ENCODE measurements at regions of chr11 and their contacts with region 1.

Region 1: DNA sequence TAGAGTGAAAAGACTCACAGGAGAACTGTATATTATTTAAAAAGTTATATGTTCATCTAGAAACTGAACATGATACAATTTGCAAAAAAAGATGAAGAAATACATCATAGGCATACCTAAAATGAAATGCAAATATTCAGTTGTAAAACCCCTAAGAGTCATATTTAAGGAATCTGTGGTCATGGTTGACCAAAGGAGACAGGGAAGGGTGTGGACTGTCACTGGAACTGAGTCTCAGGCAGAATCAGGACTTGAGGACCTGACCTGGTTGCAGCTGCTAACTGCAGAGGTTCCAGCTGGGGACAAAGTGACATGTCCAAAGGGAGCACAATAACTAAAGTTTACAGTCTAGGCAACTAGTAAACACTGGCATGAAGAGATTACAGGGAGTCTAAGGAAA is 211.3 kb upstream of the RAG2 start:
- DNase-seq: no peak
- H3K4me3 Mint-ChIP-seq: no peak overlapping the region
- H3K27ac Mint-ChIP-seq: no peak overlapping the region
- H3K4me1 Mint-ChIP-seq: no peaks in the 10 kb centered on the region
- H3K27me3 Mint-ChIP-seq: no peaks in the 10 kb centered on the region

Region 2: GRCh38 chr11:36874291-36874690 is 65.0 kb after region 1 on chr11:
- intact Hi-C with region 1: loop called (anchors 2 kb)
- DNase-seq: no peak
- H3K4me3 Mint-ChIP-seq: no peak overlapping the region
- H3K27ac Mint-ChIP-seq: no peak overlapping the region
- H3K4me1 Mint-ChIP-seq: no peaks in the 10 kb centered on the region
- H3K27me3 Mint-ChIP-seq: no peaks in the 10 kb centered on the region

Region 3: DNA sequence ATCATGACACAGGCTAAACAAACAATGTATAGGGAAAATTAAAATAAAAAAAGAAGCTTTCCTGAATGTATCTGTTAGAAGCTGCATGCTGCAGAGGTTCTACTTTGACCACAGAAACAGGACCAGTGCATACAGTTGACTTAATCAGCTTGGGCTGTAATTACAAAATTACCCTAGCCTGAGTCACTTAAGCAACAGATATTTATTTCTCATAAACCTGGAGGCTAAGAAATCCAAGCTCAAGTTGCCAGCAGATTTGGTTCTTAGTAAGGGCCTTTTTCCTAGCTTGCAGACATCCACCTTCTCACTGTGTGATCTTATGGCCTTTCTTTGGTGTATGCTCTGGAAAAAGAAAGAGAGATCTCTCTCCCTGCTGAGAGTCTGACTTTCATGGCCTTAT is 735.2 kb after region 1 on chr11:
- intact Hi-C with region 1: no loop called
- DNase-seq: no peak
- H3K4me3 Mint-ChIP-seq: no peak overlapping the region
- H3K27ac Mint-ChIP-seq: no peak overlapping the region
- H3K4me1 Mint-ChIP-seq: no peaks in the 10 kb centered on the region
- H3K27me3 Mint-ChIP-seq: no peaks in the 10 kb centered on the region